ENCODE measurements at regions of chr1 and their contacts with region 1.

Region 1: GRCh38 chr1:244858357-244858756 is 6.0 kb downstream of the HNRNPU start:
- DNase-seq: no peak
- H3K4me3 ChIP-seq: no peak overlapping the region
- H3K27ac ChIP-seq: peak overlapping the region in 1 of 4 donors; percentile 99
- H3K4me1 ChIP-seq: peaks cover 0 to 75% (median 56%) of the 10 kb centered on the region in 4 donors
- H3K27me3 ChIP-seq: no peaks in the 10 kb centered on the region
- CTCF ChIP-seq: no peak
- EP300 ChIP-seq: no peak
- POLR2A ChIP-seq: no peak

Region 2: DNA sequence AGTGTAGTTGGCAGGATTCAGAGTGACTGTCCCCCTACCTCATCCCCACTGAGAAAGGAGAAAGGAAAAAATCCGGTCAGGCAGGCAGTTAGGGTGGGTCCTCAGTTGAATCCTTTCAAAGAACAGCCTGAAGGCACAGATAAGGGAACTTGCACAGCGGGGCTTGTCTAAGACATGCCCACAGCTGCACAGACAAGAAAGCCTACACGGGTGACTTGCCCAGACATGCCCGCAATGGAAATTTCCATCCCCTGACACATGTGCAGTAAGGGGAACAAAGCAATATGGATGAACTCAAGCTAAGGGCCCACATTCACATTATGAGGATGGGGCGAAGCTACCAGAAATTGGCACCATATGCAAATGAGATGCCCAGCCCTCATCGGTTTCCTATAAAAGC is 123.0 kb before region 1 on chr1:
- intact Hi-C with region 1: no loop called
- DNase-seq: no peak
- H3K4me3 ChIP-seq: no peak overlapping the region
- H3K27ac ChIP-seq: no peak overlapping the region
- H3K4me1 ChIP-seq: peaks cover 0 to 6% (median 0%) of the 10 kb centered on the region in 4 donors
- H3K27me3 ChIP-seq: no peaks in the 10 kb centered on the region
- CTCF ChIP-seq: no peak
- EP300 ChIP-seq: no peak
- POLR2A ChIP-seq: no peak

Region 3: DNA sequence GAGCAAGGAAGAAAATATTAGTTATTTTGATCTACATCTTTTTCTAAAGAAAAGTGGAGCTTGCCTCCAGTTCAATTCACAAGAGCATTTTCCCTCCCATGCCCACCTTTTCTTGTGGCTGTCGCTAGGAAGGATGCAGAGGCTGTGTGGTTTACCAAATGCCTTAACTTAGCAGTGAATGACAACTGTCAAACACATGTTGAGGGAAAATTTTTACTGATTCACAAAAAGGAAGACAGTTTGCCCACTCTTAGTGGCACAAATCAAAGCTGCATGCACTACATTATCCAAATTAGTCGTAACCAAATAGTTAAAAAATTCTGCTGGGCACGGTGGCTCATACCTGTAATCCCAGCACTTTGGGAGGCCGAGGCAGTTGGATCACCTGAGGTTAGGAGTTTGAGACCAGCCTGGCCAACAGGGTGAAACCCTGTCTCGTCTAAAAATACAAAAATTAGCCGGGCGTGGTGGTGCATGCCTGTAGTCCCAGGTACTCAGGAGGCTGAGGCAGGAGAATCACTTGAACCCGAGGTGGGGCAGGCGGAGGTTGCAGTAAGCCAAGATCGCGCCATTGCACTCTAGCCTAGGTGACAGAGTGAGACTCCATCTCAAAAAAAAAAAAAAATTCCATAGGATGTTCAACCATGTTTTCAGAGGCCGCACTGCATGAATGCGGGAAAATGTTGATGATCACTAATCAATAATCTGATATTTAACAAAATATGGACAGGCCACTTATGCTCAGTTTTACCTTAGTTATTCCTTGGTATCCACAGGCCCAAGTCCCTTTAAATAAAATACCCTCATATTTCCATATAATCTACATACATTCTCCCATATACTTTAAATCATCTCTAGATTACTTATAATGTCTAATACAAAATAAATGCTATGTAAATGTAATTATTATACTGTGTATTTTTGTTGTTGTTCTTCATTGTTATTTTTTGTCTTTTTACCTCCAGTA is 13.9 kb before region 1 on chr1:
- intact Hi-C with region 1: loop called (anchors 1 kb)
- DNase-seq: no peak
- H3K4me3 ChIP-seq: no peak overlapping the region
- H3K27ac ChIP-seq: peak overlapping the region in 2 of 4 donors; percentile 3 to 99
- H3K4me1 ChIP-seq: peaks cover 0 to 46% (median 36%) of the 10 kb centered on the region in 4 donors
- H3K27me3 ChIP-seq: no peaks in the 10 kb centered on the region
- CTCF ChIP-seq: no peak
- EP300 ChIP-seq: no peak
- POLR2A ChIP-seq: no peak

Measured in sigmoid colon (tissue), 7 donors.